ENCODE measurements at regions of chr10 and their contacts with region 1.

Region 1: GRCh38 chr10:59240582-59241183 is 64.2 kb downstream of the PHYHIPL start:
- DNase-seq: no peak
- H3K4me3 ChIP-seq: no peak overlapping the region
- H3K27ac ChIP-seq: no peak overlapping the region
- H3K4me1 ChIP-seq: no peaks in the 10 kb centered on the region
- H3K27me3 ChIP-seq: no peaks in the 10 kb centered on the region
- CTCF ChIP-seq: peak; percentile 47 to 71 (median 68)

Region 2: GRCh38 chr10:58781873-58782488 is 458.7 kb before region 1 on chr10:
- intact Hi-C with region 1: loop called (anchors 5 kb)
- DNase-seq: no peak
- H3K4me3 ChIP-seq: no peak overlapping the region
- H3K27ac ChIP-seq: no peak overlapping the region
- H3K4me1 ChIP-seq: peaks cover 0 to 4% of the 10 kb centered on the region in 2 donors
- H3K27me3 ChIP-seq: no peaks in the 10 kb centered on the region
- CTCF ChIP-seq: peak; percentile 34 to 70 (median 58)

Region 3: GRCh38 chr10:58952747-58953466 is 287.8 kb before region 1 on chr10:
- intact Hi-C with region 1: loop called (anchors 5 kb)
- DNase-seq: peak in 1 of 2 donors; percentile 72
- H3K4me3 ChIP-seq: no peak overlapping the region
- H3K27ac ChIP-seq: peak overlapping the region in 1 of 2 donors; percentile 1
- H3K4me1 ChIP-seq: peaks cover 0 to 7% of the 10 kb centered on the region in 2 donors
- H3K27me3 ChIP-seq: no peaks in the 10 kb centered on the region
- CTCF ChIP-seq: peak; percentile 74 to 88 (median 84)

Region 4: GRCh38 chr10:59047957-59048618 is 192.6 kb before region 1 on chr10:
- intact Hi-C with region 1: no loop called
- DNase-seq: no peak
- H3K4me3 ChIP-seq: no peak overlapping the region
- H3K27ac ChIP-seq: no peak overlapping the region
- H3K4me1 ChIP-seq: peaks cover 0 to 8% of the 10 kb centered on the region in 2 donors
- H3K27me3 ChIP-seq: no peaks in the 10 kb centered on the region
- CTCF ChIP-seq: no peak

Region 5: DNA sequence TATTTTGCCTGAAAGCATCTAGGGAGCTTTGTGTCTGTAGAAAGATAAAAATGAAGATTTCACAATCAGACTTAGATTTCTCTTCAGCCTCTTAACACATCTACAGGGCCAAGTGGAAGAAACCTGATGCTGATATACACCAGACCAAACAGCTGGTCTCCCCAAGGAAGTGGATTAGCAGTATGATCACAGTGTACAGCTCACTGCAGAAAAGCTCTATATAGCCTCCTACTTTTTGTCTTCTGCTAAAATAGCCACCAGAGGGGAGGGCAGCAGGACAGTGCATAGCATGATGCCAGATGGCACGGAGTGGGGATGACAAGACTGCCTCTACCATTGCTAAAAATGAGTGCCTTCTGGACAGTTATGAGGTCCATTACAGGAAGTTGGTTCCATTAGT is 105.6 kb after region 1 on chr10:
- intact Hi-C with region 1: no loop called
- DNase-seq: no peak
- H3K4me3 ChIP-seq: no peak overlapping the region
- H3K27ac ChIP-seq: no peak overlapping the region
- H3K4me1 ChIP-seq: peaks cover 0 to 3% of the 10 kb centered on the region in 2 donors
- H3K27me3 ChIP-seq: no peaks in the 10 kb centered on the region
- CTCF ChIP-seq: no peak

Region 6: GRCh38 chr10:59465088-59465487 is 224.4 kb after region 1 on chr10:
- intact Hi-C with region 1: loop called (anchors 10 kb)
- DNase-seq: no peak
- H3K4me3 ChIP-seq: no peak overlapping the region
- H3K27ac ChIP-seq: no peak overlapping the region
- H3K4me1 ChIP-seq: peaks cover 0 to 3% of the 10 kb centered on the region in 2 donors
- H3K27me3 ChIP-seq: no peaks in the 10 kb centered on the region
- CTCF ChIP-seq: peak in 2 of 3 experiments; percentile 4 to 45

Region 7: DNA sequence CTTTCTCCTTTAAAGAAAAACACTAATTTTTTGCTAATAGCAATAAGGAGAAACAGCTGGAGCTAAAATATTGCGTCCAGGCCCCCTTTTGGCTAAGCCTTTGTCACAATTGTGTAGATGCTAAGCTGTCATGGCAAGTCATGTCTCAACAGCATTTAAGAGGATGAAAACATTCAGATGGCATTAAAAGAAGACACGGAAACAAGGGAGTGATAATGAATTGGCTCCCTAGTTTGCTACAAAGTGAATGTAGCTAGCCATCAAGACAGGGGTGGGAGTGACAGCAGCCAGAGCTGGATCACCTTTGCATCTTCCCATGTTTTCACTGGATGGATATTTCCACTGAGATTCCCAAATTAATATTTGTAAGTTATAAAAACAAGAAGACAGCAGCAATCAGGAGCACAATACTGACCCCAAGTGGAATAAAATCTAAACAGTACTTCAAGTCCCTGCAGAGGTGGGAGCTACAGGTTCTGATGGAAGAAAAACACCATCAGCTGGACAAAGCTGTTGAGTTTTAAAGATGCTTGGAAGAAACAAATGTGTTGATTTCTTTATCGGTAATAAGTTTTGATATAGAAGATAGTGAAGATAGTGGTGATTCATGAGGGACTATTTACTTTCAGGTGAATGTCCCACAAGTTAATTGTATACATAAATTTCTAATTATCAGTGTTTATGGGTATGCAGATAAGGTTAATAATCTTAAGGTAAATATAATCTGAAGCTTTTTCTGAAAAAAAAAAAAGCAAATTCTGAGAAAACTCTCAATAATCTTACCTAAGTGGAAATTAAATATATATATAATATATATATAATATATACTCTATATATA is 339.6 kb after region 1 on chr10:
- intact Hi-C with region 1: loop called (anchors 2 kb)
- DNase-seq: no peak
- H3K4me3 ChIP-seq: no peak overlapping the region
- H3K27ac ChIP-seq: no peak overlapping the region
- H3K4me1 ChIP-seq: no peaks in the 10 kb centered on the region
- H3K27me3 ChIP-seq: no peaks in the 10 kb centered on the region
- CTCF ChIP-seq: peak; percentile 23 to 57 (median 28)

Region 8: DNA sequence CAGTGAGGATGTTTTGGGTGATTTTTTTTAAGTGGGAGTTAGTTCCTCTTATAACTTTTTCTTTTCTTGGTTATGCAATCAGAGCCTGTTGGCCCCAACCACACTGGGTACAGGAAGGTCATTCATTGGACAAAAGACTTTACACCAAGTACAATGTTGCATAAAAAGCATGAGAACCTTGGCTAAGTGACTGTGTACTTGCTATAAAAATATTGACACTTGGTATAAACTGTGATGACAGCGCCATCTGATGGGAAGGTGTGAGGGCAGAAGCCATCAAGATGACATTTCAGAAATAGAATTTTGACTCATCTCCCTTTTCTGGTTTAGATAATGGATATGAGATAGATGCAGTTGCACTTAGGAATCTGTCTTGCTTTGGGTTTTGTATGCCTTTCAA is 792.0 kb after region 1 on chr10:
- intact Hi-C with region 1: loop called (anchors 10 kb)
- DNase-seq: peak in 1 of 2 donors; percentile 75
- H3K4me3 ChIP-seq: no peak overlapping the region
- H3K27ac ChIP-seq: no peak overlapping the region
- H3K4me1 ChIP-seq: no peaks in the 10 kb centered on the region
- H3K27me3 ChIP-seq: no peaks in the 10 kb centered on the region
- CTCF ChIP-seq: peak; percentile 41 to 55 (median 51)